Thyroid gland (tissue), 4 donors: ENCODE measurements at regions of chr9 and their contacts with region 1.

Region 1: DNA sequence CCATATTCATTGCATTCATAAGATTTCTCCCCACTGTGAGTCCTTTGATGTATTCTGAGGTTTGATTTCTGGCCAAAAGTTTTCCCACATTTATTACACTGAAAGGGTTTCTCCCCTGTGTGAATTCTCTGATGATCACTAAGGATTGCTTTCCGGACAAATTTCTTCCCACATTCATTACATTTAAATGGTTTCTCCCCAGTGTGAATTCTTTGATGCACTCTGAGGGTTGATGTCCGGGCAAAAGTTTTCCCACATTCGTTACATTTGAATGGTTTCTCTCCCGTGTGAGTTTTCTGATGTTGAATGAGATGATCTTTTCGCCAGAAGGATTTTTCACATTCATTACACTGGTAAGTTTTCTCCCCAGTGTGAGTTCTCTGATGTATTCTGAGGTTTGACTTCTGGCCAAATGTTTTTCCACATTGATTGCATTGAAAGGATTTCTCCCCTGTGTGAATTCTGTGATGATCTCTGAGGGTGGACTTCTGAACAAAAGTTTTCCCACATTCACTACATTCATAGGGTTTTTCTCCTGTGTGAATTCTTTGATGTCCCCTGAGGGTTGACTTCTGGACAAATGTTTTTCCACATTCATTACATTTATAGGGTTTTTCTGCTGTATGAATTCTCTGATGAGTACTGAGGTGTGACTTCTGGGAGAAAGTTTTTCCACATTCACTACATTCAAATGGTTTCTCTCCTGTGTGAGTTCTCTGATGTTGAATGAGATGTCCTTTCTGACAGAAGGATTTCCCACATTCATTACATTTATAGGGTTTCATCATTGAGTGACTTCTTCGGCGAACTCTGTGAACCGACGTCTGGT is 18.8 kb downstream of the ZNF510 start:
- DNase-seq: no peak
- H3K4me3 ChIP-seq: no peak overlapping the region
- H3K27ac ChIP-seq: no peak overlapping the region
- H3K4me1 ChIP-seq: no peaks in the 10 kb centered on the region
- H3K27me3 ChIP-seq: no peaks in the 10 kb centered on the region
- CTCF ChIP-seq: no peak
- POLR2A ChIP-seq: no peak

Region 2: GRCh38 chr9:96818535-96818934 is 59.5 kb after region 1 on chr9:
- intact Hi-C with region 1: loop called (anchors 5 kb)
- DNase-seq: no peak
- H3K4me3 ChIP-seq: no peak overlapping the region
- H3K27ac ChIP-seq: no peak overlapping the region
- H3K4me1 ChIP-seq: no peaks in the 10 kb centered on the region
- H3K27me3 ChIP-seq: no peaks in the 10 kb centered on the region
- CTCF ChIP-seq: no peak
- POLR2A ChIP-seq: no peak